Naive thymus-derived CD4-positive, alpha-beta T cell (primary cell): ENCODE measurements at regions of chr3 and their contacts with region 1.

Region 1: GRCh38 chr3:152268555-152269425 is at the start of gene MBNL1:
- DNase-seq: peak; percentile 65 to 89 (median 87)
- ATAC-seq: peak; percentile 77
- H3K4me3 ChIP-seq: peak within 1 kb of the TSS; percentile 77
- H3K4me3 Mint-ChIP-seq: peak within 1 kb of the TSS; percentile 78 to 100 (median 94)
- H3K27ac ChIP-seq: peak within 1 kb of the TSS; percentile 99
- H3K27ac Mint-ChIP-seq: peak within 1 kb of the TSS; percentile 88 to 98 (median 95)
- H3K4me1 ChIP-seq: peaks cover 34 to 46% of the 10 kb centered on the region in 2 donors
- H3K4me1 Mint-ChIP-seq: peaks cover 46 to 69% (median 64%) of the 10 kb centered on the region in 7 donors
- H3K27me3 ChIP-seq: no peaks in the 10 kb centered on the region
- H3K27me3 Mint-ChIP-seq: no peaks in the 10 kb centered on the region
- total RNA-seq, gene MBNL1: 459 to 675 (median 508) TPM

Region 2: DNA sequence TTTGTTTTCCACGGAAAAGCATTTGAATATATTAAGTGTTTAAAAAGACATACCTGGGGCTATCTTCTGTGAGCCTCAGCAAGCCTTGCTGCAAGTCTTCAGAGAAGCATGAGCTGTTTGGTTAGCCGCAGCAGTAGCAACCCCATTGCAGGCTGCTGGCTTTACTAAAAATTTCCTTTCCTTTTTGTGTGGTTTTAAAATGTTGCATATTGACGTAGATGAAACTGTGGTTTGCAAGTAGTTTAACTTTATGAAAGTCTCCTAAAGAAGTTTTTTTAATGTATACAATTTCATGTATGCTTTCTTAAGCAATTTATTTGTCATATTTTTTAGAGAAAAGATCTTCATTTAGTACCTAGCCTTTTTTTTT is 1065.8 kb before region 1 on chr3 and contains the start of gene GPR171:
- CTCF ChIA-PET with region 1: no interaction called
- POLR2A ChIA-PET with region 1: no interaction called
- intact Hi-C with region 1: loop called in 1 of 2 experiments (anchors 5 kb)
- DNase-seq: peak in 8 of 9 donors; percentile 62 to 88 (median 82)
- ATAC-seq: peak; percentile 95
- H3K4me3 ChIP-seq: peak within 1 kb of the TSS; percentile 79
- H3K4me3 Mint-ChIP-seq: peak within 1 kb of the TSS; percentile 72 to 94 (median 84)
- H3K27ac ChIP-seq: peak within 1 kb of the TSS; percentile 75
- H3K27ac Mint-ChIP-seq: peak within 1 kb of the TSS; percentile 76 to 98 (median 94)
- H3K4me1 ChIP-seq: peaks cover 45 to 57% of the 10 kb centered on the region in 2 donors
- H3K4me1 Mint-ChIP-seq: peaks cover 34 to 82% (median 71%) of the 10 kb centered on the region in 7 donors
- H3K27me3 ChIP-seq: no peaks in the 10 kb centered on the region
- H3K27me3 Mint-ChIP-seq: no peaks in the 10 kb centered on the region
- total RNA-seq, gene GPR171: 16.0 to 251 (median 63.4) TPM

Region 3: DNA sequence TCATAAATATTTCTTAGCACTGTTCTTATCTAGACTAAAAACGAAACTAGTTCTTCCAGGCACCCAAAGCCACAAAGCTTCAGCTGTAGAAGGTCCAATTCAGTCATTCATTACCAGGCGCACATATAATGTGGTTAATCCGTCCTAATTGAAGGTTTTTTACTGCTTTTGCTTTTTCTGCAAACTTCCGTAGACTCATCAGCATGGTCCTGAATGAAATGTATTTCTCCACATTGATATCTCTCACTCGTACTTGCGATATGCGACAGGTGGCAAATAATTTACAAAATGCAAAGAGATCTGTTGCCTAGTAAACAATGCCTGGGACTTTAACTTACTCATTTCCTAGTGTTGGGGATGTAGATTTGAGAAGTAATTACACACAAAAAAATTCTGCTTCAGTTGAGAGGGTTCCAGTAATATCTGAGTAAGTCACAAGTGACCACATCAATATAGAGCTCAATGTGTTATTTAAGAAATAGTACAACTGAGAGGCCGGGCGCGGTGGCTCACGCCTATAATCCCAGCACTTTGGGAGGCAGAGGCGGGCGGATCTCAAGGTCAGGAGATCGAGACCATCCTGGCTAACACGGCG is 75.0 kb before region 1 on chr3:
- CTCF ChIA-PET with region 1: interaction called, 6 read pairs
- POLR2A ChIA-PET with region 1: interaction called, 198 read pairs
- intact Hi-C with region 1: loop called in 1 of 2 experiments (anchors 2 kb)
- DNase-seq: peak in 6 of 9 donors; percentile 44 to 63 (median 51)
- ATAC-seq: peak; percentile 70
- H3K4me3 ChIP-seq: peak overlapping the region; percentile 58
- H3K4me3 Mint-ChIP-seq: peak overlapping the region; percentile 72 to 92 (median 86)
- H3K27ac ChIP-seq: peak overlapping the region; percentile 70
- H3K27ac Mint-ChIP-seq: peak overlapping the region; percentile 76 to 100 (median 93)
- H3K4me1 ChIP-seq: peaks cover 43 to 46% of the 10 kb centered on the region in 2 donors
- H3K4me1 Mint-ChIP-seq: peaks cover 52 to 91% (median 85%) of the 10 kb centered on the region in 7 donors
- H3K27me3 ChIP-seq: no peaks in the 10 kb centered on the region
- H3K27me3 Mint-ChIP-seq: no peaks in the 10 kb centered on the region

Region 4: GRCh38 chr3:152222327-152222726 is 46.5 kb before region 1 on chr3:
- CTCF ChIA-PET with region 1: interaction called, 5 read pairs
- POLR2A ChIA-PET with region 1: interaction called, 66 read pairs
- intact Hi-C with region 1: loop called in 1 of 2 experiments (anchors 1 kb)
- DNase-seq: peak in 1 of 9 donors; percentile 14
- ATAC-seq: peak; percentile 57
- H3K4me3 ChIP-seq: peak overlapping the region; percentile 3
- H3K4me3 Mint-ChIP-seq: peak overlapping the region; percentile 48 to 86 (median 74)
- H3K27ac ChIP-seq: peak overlapping the region; percentile 67
- H3K27ac Mint-ChIP-seq: peak overlapping the region; percentile 65 to 99 (median 92)
- H3K4me1 ChIP-seq: peaks cover 4 to 46% of the 10 kb centered on the region in 2 donors
- H3K4me1 Mint-ChIP-seq: peaks cover 49 to 80% (median 71%) of the 10 kb centered on the region in 7 donors
- H3K27me3 ChIP-seq: no peaks in the 10 kb centered on the region
- H3K27me3 Mint-ChIP-seq: no peaks in the 10 kb centered on the region

Region 5: GRCh38 chr3:152241142-152242017 is 27.4 kb before region 1 on chr3:
- CTCF ChIA-PET with region 1: interaction called, 12 read pairs
- POLR2A ChIA-PET with region 1: interaction called, 252 read pairs
- intact Hi-C with region 1: loop called (anchors 1 kb)
- DNase-seq: no peak
- ATAC-seq: no peak
- H3K4me3 ChIP-seq: peak overlapping the region; percentile 24
- H3K4me3 Mint-ChIP-seq: peak overlapping the region; percentile 64 to 97 (median 92)
- H3K27ac ChIP-seq: peak overlapping the region; percentile 72
- H3K27ac Mint-ChIP-seq: peak overlapping the region; percentile 78 to 97 (median 94)
- H3K4me1 ChIP-seq: peaks cover 35 to 57% of the 10 kb centered on the region in 2 donors
- H3K4me1 Mint-ChIP-seq: peaks cover 36 to 79% (median 68%) of the 10 kb centered on the region in 7 donors
- H3K27me3 ChIP-seq: no peaks in the 10 kb centered on the region
- H3K27me3 Mint-ChIP-seq: no peaks in the 10 kb centered on the region

Region 6: GRCh38 chr3:152291649-152292066 is 22.9 kb after region 1 on chr3:
- CTCF ChIA-PET with region 1: interaction called, 5 read pairs
- POLR2A ChIA-PET with region 1: interaction called, 14 read pairs
- intact Hi-C with region 1: no loop called
- DNase-seq: no peak
- ATAC-seq: peak; percentile 58
- H3K4me3 ChIP-seq: no peak overlapping the region
- H3K4me3 Mint-ChIP-seq: peak overlapping the region; percentile 51 to 78 (median 73)
- H3K27ac ChIP-seq: peak overlapping the region; percentile 40
- H3K27ac Mint-ChIP-seq: peak overlapping the region; percentile 30 to 87 (median 71)
- H3K4me1 ChIP-seq: peaks cover 62 to 82% of the 10 kb centered on the region in 2 donors
- H3K4me1 Mint-ChIP-seq: peaks cover 54 to 96% (median 85%) of the 10 kb centered on the region in 7 donors
- H3K27me3 ChIP-seq: no peaks in the 10 kb centered on the region
- H3K27me3 Mint-ChIP-seq: no peaks in the 10 kb centered on the region

Region 7: DNA sequence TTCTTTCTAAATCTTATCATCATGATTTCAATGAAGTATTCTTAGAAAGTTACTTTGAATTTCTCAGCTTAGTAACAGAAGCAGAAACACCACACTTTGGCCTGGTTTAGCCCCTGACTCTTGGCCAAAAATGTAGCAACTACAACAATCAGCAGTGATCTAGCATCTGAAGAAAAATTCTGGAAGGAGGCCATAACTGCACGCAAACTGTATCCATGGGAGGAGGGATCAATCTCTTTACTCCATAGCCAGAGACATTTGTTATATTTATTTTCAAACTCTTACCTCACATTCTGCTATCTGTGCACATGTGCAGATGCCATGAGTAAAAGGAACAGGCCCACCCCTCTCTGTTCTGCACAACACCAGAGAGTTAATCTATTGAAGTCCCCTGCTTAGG is 315.2 kb after region 1 on chr3:
- CTCF ChIA-PET with region 1: no interaction called
- POLR2A ChIA-PET with region 1: no interaction called
- intact Hi-C with region 1: no loop called
- DNase-seq: no peak
- ATAC-seq: no peak
- H3K4me3 ChIP-seq: no peak overlapping the region
- H3K4me3 Mint-ChIP-seq: no peak overlapping the region
- H3K27ac ChIP-seq: no peak overlapping the region
- H3K27ac Mint-ChIP-seq: no peak overlapping the region
- H3K4me1 ChIP-seq: no peaks in the 10 kb centered on the region
- H3K4me1 Mint-ChIP-seq: no peaks in the 10 kb centered on the region
- H3K27me3 ChIP-seq: no peaks in the 10 kb centered on the region
- H3K27me3 Mint-ChIP-seq: peaks cover 9 to 39% (median 17%) of the 10 kb centered on the region in 5 donors